ENCODE measurements at regions of chr3 and their contacts with region 1.

Region 1: GRCh38 chr3:69671082-69671952 is 67.9 kb upstream of the MITF start:
- DNase-seq: peak in 3 of 10 donors; percentile 30 to 85 (median 46)

Region 2: DNA sequence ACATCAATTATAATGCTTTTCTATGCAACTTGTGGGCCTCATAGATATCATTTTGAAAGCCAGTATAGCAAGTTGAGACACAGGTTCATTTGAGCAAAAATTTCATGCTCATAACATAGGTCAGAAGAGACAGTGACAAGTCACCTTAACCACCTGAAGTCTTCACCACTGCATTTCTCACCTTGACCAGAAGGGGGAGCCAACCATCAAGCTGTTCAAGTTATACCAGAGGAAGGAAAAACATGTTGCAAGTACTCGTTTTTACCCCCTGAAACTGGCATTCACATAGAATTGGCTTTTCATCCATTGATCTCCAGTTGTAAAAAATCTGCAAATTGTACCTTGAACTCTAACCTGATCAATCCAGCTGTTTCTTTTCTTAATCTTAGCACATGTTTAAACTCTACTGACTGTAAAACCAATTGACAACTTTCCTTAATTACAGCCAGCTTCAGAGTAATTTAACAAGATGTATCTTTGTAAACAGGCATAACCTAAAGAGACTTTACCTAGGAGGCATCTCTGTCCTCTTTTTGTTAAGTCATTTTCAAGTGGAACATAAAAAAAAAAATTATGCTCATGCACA is 550.3 kb before region 1 on chr3:
- intact Hi-C with region 1: loop called (anchors 5 kb)
- DNase-seq: peak in 6 of 10 donors; percentile 32 to 77 (median 76)

Region 3: DNA sequence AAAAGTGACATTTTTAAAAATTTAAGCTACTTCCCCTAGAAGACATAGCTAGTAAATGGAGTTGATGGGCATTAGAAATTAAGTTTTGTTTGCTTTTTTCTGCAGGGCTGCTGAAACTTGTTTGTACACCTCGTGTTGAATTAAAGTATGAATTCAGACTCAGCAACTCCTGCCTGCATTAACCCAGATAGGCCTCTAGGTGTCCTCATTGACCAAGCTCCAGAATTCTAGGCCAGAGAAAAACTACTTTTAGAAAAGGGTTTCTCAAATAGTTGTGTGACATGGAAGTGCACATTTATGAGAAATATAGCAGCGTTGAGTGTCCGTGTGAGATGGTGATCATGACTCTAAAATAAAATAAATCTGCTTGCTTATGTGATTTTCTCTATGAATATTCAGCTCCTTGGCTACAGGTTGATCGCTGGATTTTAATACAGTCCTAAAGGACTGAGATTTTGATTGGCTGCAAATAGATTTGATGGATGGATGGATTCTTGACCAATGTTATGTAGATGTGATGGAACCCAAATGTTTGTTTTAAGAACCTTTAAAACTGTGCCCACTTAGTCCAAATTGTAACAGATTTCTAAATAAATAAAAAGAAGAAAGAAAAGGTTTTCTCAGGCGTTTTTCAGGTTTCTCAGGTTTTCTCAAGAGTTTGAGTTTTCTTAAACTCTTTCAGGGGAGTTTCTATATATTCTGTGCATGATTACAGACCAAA is 509.6 kb before region 1 on chr3:
- intact Hi-C with region 1: loop called (anchors 2 kb)
- DNase-seq: peak in 2 of 10 donors; percentile 29 to 34

Region 4: DNA sequence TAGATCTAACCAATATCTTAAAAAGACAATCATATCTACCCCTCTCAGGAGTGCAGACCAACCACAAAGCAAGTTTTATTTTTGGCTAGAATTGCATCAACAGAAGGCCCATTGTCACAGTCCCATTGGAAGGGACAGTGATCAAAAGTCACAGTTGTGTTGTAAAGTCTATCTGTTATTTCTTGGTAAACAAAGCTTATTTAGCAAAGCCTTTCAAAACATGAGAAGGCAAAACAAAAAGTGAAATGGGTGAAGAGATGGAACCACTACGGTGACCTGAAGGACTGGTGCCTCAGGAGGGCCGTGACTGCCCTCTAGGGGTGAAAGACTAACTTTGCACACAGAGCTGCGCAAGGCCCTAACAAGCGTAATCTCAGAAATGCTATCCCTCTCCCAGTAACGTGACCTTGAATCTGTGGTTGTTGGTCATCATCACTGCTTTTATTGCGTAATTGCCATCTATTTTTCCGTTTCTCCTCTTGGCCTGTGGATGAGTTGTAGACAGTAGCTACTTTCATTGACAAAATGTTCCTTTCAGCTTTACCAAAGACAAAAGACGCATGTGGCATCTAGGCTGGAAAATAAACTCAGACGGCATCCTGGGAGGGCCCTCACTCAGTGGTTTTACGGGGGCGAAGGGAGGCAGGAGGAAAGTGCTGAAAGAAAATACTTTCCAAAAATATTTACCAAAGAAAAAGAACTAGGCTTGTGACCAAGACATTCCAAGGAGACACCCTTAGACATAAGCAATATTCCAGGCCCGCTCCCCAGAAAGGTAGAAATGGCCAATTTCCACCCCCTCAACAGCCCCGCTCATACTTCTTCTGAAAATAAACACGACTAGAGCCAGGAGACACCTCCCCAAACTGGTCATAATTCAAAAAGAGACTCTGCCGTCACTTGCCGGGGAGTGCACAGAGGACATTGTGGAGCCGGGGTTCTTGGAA is 364.8 kb before region 1 on chr3:
- intact Hi-C with region 1: loop called (anchors 10 kb)
- DNase-seq: peak; percentile 39 to 95 (median 70)

Region 5: GRCh38 chr3:69542221-69543079 is 128.9 kb before region 1 on chr3:
- intact Hi-C with region 1: loop called (anchors 5 kb)
- DNase-seq: peak; percentile 60 to 97 (median 74)

Region 6: GRCh38 chr3:69558912-69559311 is 112.4 kb before region 1 on chr3:
- intact Hi-C with region 1: loop called (anchors 5 kb)
- DNase-seq: no peak

Region 7: DNA sequence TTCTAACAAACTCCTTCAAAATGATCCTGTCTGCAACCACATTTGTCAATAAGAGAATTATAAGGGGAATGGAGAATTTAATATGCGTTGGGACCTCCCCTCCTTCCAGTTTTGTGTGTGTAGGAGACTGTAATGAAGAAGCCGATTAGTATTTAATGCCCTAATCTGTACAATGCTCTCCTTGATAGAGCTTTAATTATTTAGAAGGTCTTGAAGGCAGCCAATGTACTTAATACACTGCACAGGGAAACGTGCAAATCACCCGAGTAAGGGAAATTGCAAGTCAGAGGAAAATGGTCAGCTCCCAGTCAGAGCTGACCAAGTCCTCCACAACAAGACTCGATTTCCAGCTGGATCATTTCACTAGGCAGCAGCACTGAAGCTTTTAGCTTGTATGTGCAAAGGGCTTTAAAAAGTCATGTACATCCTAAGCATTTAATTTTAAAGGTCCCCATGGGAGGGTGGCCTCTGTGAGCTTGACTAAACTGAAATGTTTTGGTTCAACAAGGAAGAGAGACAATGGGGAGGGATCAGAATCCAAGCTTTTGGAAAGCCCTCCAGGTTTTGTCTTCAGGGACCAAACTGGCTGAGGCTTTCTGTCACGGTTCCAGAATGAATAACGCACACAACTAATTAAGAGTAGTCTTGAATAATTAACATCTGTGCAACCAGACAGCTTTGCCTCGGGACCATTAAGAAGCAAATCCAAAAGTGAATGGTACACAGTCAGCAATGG is 91.8 kb before region 1 on chr3:
- intact Hi-C with region 1: no loop called
- DNase-seq: no peak

Region 8: GRCh38 chr3:70947579-70947978 is 1276.3 kb after region 1 on chr3:
- intact Hi-C with region 1: no loop called
- DNase-seq: no peak

Measured in posterior cingulate gyrus (tissue), 11 donors.